IMR-90 (cell line): ENCODE measurements at regions of chr2 and their contacts with region 1.

Region 1: GRCh38 chr2:235116885-235117492 is 165.2 kb downstream of the SH3BP4 start:
- DNase-seq: peak; percentile 48
- ATAC-seq: peak; percentile 69
- H3K4me3 ChIP-seq: no peak overlapping the region
- H3K27ac ChIP-seq: no peak overlapping the region
- H3K4me1 ChIP-seq: no peaks in the 10 kb centered on the region
- H3K27me3 ChIP-seq: peaks cover 4% of the 10 kb centered on the region
- CTCF ChIP-seq: peak; percentile 76
- POLR2A ChIP-seq: no peak
- RAD21 ChIP-seq: peak; percentile 74

Region 2: GRCh38 chr2:233982421-233983121 is 1134.4 kb before region 1 on chr2:
- CTCF ChIA-PET with region 1: no interaction called
- POLR2A ChIA-PET with region 1: no interaction called
- dilution Hi-C with region 1: no loop called
- in situ Hi-C with region 1: loop called (anchors 10 kb)
- intact Hi-C with region 1: loop called (anchors 5 kb)
- DNase-seq: peak; percentile 94
- ATAC-seq: peak; percentile 92
- H3K4me3 ChIP-seq: no peak overlapping the region
- H3K27ac ChIP-seq: peak overlapping the region; percentile 65
- H3K4me1 ChIP-seq: peaks cover 7% of the 10 kb centered on the region
- H3K27me3 ChIP-seq: no peaks in the 10 kb centered on the region
- CTCF ChIP-seq: no peak
- POLR2A ChIP-seq: no peak
- RAD21 ChIP-seq: peak; percentile 24; the same call in 1 of the 2 replicates

Region 3: DNA sequence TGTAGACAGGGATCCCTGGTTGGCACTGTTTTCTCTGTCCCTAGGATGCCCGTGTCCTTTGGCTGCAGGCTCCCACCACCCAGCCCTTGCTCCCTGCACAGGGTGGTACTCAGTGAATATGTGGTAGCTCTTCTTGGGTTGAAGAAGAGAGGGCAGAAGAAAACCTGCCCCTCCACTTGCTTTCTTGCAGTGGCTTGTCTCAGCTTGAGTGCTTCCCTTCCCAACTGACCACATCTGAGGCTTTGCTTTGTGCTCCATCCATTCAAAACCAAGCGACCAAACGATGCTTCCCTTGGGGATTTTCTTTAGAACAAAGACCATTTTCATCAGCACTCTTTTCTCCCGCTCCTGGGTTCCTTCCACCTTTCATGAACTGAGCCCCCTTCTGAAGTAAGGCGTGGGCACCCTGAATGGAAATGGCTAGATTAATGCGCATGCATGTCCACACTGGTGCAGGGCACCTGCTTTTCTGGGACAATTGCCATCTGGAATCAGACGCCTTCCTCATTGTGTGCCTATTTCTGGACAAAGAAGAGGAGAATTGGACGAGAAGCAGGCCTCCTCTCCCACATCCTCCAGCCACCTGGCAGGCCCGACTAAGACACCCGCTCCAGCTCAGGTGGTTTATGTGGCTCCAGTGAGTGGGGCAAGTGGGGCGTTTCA is 679.2 kb before region 1 on chr2:
- CTCF ChIA-PET with region 1: no interaction called
- POLR2A ChIA-PET with region 1: no interaction called
- dilution Hi-C with region 1: no loop called
- in situ Hi-C with region 1: no loop called
- intact Hi-C with region 1: no loop called
- DNase-seq: no peak
- ATAC-seq: no peak
- H3K4me3 ChIP-seq: no peak overlapping the region
- H3K27ac ChIP-seq: no peak overlapping the region
- H3K4me1 ChIP-seq: peaks cover 2% of the 10 kb centered on the region; the same call in 1 of the 2 replicates
- H3K27me3 ChIP-seq: no peaks in the 10 kb centered on the region
- CTCF ChIP-seq: no peak
- POLR2A ChIP-seq: no peak
- RAD21 ChIP-seq: no peak

Region 4: DNA sequence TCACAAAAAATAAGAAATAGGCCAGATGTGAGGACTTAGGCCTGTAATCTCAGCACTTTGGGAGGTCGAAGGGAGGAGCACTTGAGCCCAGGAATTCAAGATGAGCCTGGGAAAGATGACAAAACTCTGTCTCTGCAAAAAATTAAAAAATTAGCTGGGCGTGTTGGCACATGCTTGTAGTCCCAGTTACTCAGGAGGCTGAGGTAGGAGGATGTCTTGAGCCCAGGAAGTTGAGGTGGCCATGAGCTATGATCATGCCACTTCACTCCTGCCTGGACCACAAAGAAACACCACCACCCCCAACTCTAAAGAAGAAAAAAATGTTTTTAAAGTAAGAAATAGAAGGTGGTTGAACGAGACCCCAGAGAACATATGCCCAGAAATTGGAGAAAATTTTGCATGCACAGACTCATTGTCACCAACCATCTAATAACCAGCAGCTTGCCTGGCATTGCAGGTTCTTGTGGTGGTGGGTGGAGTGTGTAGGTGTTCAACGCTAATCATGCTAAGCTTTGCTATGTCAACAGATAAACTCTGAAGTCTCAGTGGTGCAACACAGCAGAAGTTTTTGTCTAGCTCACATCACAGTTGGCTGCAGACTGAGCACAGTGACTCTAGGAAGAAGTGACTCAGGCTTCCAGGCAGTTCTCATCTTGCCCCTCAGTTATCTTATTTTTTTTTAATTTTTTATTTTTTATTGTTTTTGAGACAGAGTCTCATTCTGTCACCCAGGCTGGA is 638.7 kb before region 1 on chr2:
- CTCF ChIA-PET with region 1: no interaction called
- POLR2A ChIA-PET with region 1: no interaction called
- dilution Hi-C with region 1: no loop called
- in situ Hi-C with region 1: no loop called
- intact Hi-C with region 1: no loop called
- DNase-seq: peak; percentile 39
- ATAC-seq: no peak; the same call in 1 of the 2 replicates
- H3K4me3 ChIP-seq: no peak overlapping the region
- H3K27ac ChIP-seq: no peak overlapping the region
- H3K4me1 ChIP-seq: no peaks in the 10 kb centered on the region
- H3K27me3 ChIP-seq: no peaks in the 10 kb centered on the region; the same call in 1 of the 2 replicates
- CTCF ChIP-seq: no peak
- POLR2A ChIP-seq: no peak
- RAD21 ChIP-seq: no peak

Region 5: DNA sequence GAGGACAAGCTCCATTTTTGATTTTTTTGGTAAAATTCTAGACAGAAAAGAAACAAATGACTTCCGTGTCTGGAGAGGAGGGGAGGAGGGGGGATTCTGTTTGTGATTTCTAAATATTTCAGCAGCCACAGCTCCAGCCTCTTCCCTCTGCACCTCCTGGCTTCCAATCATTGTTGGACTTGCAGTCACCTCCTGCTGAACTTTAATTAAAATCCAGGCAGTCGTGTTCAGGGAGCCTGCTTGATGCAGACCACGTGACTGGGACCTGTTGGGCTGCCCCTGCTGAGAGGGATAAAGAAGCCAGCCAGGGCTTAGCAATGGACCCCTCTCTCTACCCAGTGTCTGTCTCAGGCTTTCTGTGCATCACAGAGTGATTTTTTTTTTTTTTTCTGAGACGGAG is 50.1 kb before region 1 on chr2:
- CTCF ChIA-PET with region 1: no interaction called
- POLR2A ChIA-PET with region 1: no interaction called
- dilution Hi-C with region 1: no loop called
- in situ Hi-C with region 1: no loop called
- intact Hi-C with region 1: no loop called
- DNase-seq: no peak
- ATAC-seq: no peak
- H3K4me3 ChIP-seq: no peak overlapping the region
- H3K27ac ChIP-seq: no peak overlapping the region
- H3K4me1 ChIP-seq: no peaks in the 10 kb centered on the region; the same call in 1 of the 2 replicates
- H3K27me3 ChIP-seq: 0 out of 2 replicates have a peak, but pooled peaks cover 2% of the 10 kb centered on the region
- CTCF ChIP-seq: no peak
- POLR2A ChIP-seq: no peak
- RAD21 ChIP-seq: no peak